CD4-positive, alpha-beta T cell (primary cell): ENCODE measurements at regions of chr2 and their contacts with region 1.

Region 1: DNA sequence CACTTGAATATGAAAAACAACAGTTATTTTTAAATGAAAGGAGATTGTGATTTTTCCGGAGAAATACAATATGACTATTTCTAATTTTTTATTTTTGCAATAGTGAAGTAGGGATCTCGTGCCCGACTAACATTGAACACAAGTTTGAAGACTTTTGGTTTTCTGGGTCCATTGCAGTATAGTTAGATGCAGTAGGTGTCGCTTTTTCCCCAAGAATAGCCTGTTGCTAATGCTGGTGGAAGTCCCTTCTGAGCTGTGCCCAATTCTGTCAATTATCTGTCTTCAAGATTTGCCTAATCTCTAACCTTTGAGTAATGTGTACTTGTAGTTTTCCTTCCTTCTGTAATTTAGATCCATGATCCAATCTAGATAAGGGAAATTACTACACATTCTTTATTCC is 36.5 kb downstream of the SEMA4F start:
- DNase-seq: peak in 5 of 14 experiments; percentile 3 to 62 (median 46)
- ATAC-seq: peak; percentile 66
- H3K4me3 ChIP-seq: no peak overlapping the region
- H3K4me3 Mint-ChIP-seq: no peak overlapping the region
- H3K27ac ChIP-seq: no peak overlapping the region
- H3K27ac Mint-ChIP-seq: no peak overlapping the region
- H3K4me1 ChIP-seq: no peaks in the 10 kb centered on the region
- H3K4me1 Mint-ChIP-seq: no peaks in the 10 kb centered on the region
- H3K27me3 ChIP-seq: no peaks in the 10 kb centered on the region
- H3K27me3 Mint-ChIP-seq: no peaks in the 10 kb centered on the region
- CTCF ChIP-seq: peak; percentile 45

Region 2: GRCh38 chr2:74876081-74876886 is 185.7 kb after region 1 on chr2:
- CTCF ChIA-PET with region 1: interaction called, 13 read pairs
- POLR2A ChIA-PET with region 1: no interaction called
- intact Hi-C with region 1: loop called (anchors 1 kb)
- DNase-seq: peak; percentile 6 to 79 (median 34)
- ATAC-seq: peak; percentile 80
- H3K4me3 ChIP-seq: no peak overlapping the region
- H3K4me3 Mint-ChIP-seq: no peak overlapping the region
- H3K27ac ChIP-seq: no peak overlapping the region
- H3K27ac Mint-ChIP-seq: no peak overlapping the region
- H3K4me1 ChIP-seq: peaks cover 6% of the 10 kb centered on the region
- H3K4me1 Mint-ChIP-seq: peaks cover 7% of the 10 kb centered on the region
- H3K27me3 ChIP-seq: no peaks in the 10 kb centered on the region
- H3K27me3 Mint-ChIP-seq: no peaks in the 10 kb centered on the region
- CTCF ChIP-seq: peak; percentile 72

Region 3: DNA sequence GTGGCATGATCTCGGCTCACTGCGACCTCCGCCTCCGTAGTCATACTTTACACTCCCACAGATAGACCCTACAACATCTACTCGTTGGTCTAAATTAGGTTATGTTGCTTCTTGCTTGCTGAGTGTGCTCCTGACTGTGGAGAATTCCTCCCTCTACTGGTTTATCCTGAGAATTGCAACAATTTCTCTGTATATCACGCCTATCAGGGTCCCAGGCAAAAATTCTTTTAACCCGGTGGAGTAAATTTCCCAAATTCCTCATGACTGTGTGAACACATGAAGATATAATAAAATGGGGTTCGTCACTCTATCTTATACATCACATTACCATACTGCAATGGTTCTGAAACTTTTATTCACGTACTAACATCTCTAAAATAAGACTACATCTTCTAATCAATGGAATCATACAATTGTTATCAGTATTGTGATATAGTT is 713.4 kb after region 1 on chr2:
- CTCF ChIA-PET with region 1: no interaction called
- POLR2A ChIA-PET with region 1: no interaction called
- intact Hi-C with region 1: loop called in 1 of 2 experiments (anchors 5 kb)
- DNase-seq: peak in 3 of 14 experiments; percentile 44 to 60 (median 55)
- ATAC-seq: peak; percentile 61
- H3K4me3 ChIP-seq: no peak overlapping the region
- H3K4me3 Mint-ChIP-seq: no peak overlapping the region
- H3K27ac ChIP-seq: no peak overlapping the region
- H3K27ac Mint-ChIP-seq: no peak overlapping the region
- H3K4me1 ChIP-seq: no peaks in the 10 kb centered on the region
- H3K4me1 Mint-ChIP-seq: peaks cover 5% of the 10 kb centered on the region
- H3K27me3 ChIP-seq: no peaks in the 10 kb centered on the region
- H3K27me3 Mint-ChIP-seq: peaks cover 10% of the 10 kb centered on the region
- CTCF ChIP-seq: peak; percentile 78

Region 4: DNA sequence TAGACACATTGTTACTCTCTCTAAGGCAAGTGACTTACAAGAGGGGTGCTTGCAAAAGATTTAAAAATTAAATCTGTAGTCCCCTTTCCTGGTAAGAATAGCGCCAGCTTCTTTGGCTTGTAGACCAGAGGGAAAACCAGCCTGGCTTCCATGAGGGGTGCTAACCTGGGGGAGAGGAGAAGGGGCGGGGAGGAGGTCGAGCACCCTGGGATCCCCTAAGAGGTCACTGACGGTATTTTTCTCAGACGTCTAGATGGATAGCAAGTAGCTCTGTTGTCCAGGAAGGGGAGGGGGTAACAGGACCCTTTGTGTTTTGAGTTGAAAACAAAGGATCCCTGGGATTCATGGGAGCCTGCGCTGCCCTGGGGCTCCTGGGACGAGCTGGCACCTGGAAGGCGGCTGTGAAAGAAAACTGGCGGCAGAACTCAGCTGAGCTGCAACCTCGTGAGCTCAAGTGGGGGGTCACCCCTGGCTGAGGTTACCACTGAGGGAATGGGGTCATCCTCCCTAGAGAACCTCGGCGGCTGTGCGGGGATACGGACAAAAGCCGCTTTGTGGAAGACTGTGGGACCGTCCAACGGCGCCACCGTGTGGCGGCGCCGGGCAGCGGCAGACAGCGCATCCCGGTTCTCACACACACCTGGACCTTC is 918.2 kb after region 1 on chr2:
- CTCF ChIA-PET with region 1: no interaction called
- POLR2A ChIA-PET with region 1: no interaction called
- intact Hi-C with region 1: loop called in 1 of 2 experiments (anchors 5 kb)
- DNase-seq: peak; percentile 20 to 68 (median 36)
- ATAC-seq: peak; percentile 71
- H3K4me3 ChIP-seq: no peak overlapping the region
- H3K4me3 Mint-ChIP-seq: no peak overlapping the region
- H3K27ac ChIP-seq: no peak overlapping the region
- H3K27ac Mint-ChIP-seq: no peak overlapping the region
- H3K4me1 ChIP-seq: peaks cover 4% of the 10 kb centered on the region
- H3K4me1 Mint-ChIP-seq: no peaks in the 10 kb centered on the region
- H3K27me3 ChIP-seq: peaks cover 27 to 28% of the 10 kb centered on the region in 2 experiments
- H3K27me3 Mint-ChIP-seq: peaks cover 81% of the 10 kb centered on the region
- CTCF ChIP-seq: peak; percentile 84

Region 5: GRCh38 chr2:75627895-75628504 is 937.4 kb after region 1 on chr2:
- CTCF ChIA-PET with region 1: no interaction called
- POLR2A ChIA-PET with region 1: no interaction called
- intact Hi-C with region 1: loop called in 1 of 2 experiments (anchors 10 kb)
- DNase-seq: peak; percentile 13 to 70 (median 41)
- ATAC-seq: peak; percentile 65
- H3K4me3 ChIP-seq: no peak overlapping the region
- H3K4me3 Mint-ChIP-seq: no peak overlapping the region
- H3K27ac ChIP-seq: no peak overlapping the region
- H3K27ac Mint-ChIP-seq: no peak overlapping the region
- H3K4me1 ChIP-seq: no peaks in the 10 kb centered on the region
- H3K4me1 Mint-ChIP-seq: no peaks in the 10 kb centered on the region
- H3K27me3 ChIP-seq: peaks cover 5 to 10% of the 10 kb centered on the region in 2 experiments
- H3K27me3 Mint-ChIP-seq: peaks cover 63% of the 10 kb centered on the region
- CTCF ChIP-seq: peak; percentile 92